Common myeloid progenitor, CD34-positive (primary cell): ENCODE measurements at regions of chr10 and their contacts with region 1.

Region 1: GRCh38 chr10:62038609-62039190 is 137.2 kb downstream of the ARID5B start:
- DNase-seq: peak; percentile 77 to 87 (median 86)
- H3K4me3 ChIP-seq: peak overlapping the region in 3 of 7 experiments; percentile 30 to 56 (median 37)
- H3K27ac ChIP-seq: no peak overlapping the region
- H3K4me1 ChIP-seq: peaks cover 13 to 51% (median 30%) of the 10 kb centered on the region in 4 experiments
- H3K27me3 ChIP-seq: no peaks in the 10 kb centered on the region

Region 2: DNA sequence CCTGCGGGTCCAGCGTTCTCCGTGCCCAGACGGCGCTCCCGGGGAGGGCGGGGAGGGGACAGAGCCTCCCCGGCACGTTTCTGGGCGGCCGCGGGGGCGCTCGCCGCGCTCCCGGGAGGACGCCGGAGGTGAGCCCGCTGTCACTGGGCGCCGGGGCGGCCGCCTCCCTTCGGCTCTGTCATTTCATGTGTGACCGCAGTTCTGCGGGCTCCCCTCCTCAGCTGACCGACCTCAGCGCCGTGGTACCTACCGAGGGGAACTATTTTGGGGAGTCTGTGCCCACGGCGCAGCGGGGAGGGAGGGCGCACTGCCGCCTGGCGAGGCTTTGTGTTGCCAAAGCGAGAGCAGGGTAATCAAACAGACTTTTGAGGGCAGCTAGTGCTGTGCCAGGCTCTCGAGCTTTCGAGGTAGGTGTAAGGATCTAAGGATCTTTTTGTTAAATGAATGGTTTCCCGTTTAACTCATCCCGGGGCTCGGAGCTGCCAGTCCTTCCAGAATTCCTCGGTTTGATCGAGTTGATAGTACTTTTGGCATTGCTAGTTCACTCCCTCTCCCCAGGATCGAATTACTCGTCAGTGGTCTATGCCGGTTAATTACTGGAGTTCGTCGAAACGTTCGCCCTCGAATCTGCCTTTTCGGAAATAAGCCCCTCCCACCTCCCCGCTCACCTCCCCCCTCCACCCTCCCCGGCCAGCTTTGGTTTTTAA is 135.3 kb before region 1 on chr10:
- CTCF ChIA-PET with region 1: interaction called, 14 read pairs
- POLR2A ChIA-PET with region 1: interaction called, 3 read pairs
- DNase-seq: peak; percentile 67 to 86 (median 77)
- H3K4me3 ChIP-seq: peak overlapping the region; percentile 58 to 100 (median 92)
- H3K27ac ChIP-seq: peak overlapping the region; percentile 85 to 99
- H3K4me1 ChIP-seq: peaks cover 16 to 48% (median 29%) of the 10 kb centered on the region in 4 experiments
- H3K27me3 ChIP-seq: no peaks in the 10 kb centered on the region

Region 3: DNA sequence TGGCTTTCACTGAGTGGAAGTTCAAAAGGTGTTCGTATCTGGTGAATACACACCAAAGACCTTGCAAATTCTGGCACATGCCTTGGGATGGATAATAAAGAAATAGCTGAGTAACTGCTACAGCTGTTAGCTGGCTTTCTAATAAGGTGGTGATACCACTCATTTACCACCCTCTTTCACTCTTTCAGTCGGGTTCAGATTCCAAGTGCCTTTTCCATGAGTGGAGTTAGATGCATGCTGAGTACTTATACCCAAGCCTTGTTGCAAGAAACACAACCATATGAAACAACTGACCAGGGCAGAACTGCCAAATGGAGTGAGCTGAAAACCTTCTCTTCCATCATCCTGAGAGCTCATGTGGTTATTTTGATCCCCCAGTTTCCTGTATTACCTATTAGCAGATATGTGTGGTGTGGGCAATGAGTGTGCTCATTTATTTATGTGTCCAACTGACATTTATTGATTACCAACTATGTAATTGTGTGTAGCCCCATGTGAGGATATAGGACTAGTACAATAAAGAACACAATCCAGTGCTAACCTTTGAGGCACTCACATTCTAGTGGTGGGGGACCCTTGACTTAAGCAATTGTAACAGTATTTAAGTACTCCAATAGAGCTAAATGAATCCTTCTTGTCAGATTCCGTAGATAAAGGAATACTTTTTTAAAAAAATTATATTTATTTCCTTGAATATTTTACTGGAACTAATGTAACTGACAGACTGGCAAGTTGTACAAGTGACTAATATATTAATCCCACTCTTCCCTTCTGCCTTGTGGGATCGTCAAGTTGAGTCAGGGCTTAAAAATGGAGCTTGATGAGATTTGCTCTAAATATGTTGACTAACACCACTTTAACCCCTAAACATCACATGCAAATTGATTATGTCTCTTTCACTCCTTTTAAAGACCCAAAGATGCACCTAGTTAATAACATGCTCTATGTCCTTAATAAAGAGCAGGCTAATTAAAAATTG is 12.5 kb before region 1 on chr10:
- CTCF ChIA-PET with region 1: interaction called, 14 read pairs
- POLR2A ChIA-PET with region 1: no interaction called
- DNase-seq: no peak
- H3K4me3 ChIP-seq: no peak overlapping the region
- H3K27ac ChIP-seq: no peak overlapping the region
- H3K4me1 ChIP-seq: peaks cover under 1 to 4% (median 2%) of the 10 kb centered on the region in 4 experiments
- H3K27me3 ChIP-seq: no peaks in the 10 kb centered on the region

Region 4: DNA sequence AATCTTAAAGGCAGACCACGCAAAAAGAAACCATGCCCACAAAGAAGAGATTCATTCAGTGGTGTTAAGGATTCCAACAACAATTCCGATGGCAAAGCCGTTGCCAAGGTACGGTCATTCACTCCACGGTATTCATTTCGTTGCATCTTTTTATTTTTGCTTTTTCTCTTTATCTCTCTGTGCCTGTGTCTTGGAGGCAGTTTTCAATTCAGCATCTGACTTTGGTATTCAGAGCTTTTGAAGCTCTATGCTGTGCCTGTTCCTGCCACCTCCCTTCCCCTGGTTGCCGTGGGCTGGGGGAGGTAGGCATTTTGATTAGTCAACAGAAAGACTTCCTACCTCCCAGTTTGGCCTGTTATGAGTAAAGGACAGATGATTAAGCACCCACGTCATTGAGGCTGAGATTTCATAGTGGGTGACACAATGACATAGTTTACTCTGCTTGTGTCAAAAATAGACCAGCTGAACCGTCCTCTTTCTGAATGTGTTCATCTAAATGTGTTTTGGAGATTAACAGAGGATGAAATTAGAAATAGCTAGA is 12.3 kb after region 1 on chr10:
- CTCF ChIA-PET with region 1: interaction called, 19 read pairs
- POLR2A ChIA-PET with region 1: no interaction called
- DNase-seq: peak in 1 of 3 donors; percentile 31
- H3K4me3 ChIP-seq: no peak overlapping the region
- H3K27ac ChIP-seq: no peak overlapping the region
- H3K4me1 ChIP-seq: peaks cover 13 to 59% (median 26%) of the 10 kb centered on the region in 4 experiments
- H3K27me3 ChIP-seq: no peaks in the 10 kb centered on the region

Region 5: DNA sequence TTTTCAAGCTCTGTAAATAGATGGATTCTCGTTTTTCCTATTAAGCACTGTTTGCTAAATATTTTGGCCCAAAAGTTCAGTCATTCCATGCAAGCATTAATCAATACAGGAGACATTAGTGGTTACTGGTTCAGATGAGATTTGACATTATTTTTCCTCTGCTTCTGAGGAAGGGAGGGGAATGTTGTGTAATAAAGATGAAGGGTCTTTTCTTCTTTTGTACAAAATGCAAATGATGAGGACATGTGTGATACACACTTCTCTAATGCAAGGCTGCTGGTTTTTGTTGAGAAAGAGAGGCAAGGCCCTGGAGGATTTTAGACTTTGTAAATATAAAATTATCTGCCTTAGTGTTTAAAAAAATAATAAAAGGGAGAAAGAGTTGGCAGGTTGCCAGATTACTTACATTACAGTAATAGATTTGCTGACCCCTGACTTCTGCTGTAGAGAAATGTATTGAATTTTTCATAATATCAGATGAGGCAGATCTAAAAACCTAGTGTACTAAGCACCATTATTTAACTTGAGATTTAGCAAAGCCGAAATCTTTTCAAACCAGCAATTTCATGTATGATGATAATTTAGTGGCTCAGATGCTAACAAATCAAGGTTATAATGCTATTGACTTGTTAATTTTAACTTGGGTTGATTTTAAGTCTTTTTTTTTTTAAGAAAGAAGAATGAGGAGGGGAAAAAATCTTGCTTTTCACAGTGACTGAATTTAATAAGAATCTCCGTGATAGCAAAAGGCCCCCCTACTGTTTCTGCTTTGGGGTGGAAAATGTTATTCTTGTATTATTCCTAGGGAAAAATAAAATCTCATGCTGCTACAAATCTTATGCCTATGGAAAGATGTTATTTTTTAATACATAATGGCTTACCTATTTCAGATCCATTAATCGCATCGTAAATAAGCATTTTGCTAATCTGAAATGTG is 42.9 kb after region 1 on chr10:
- CTCF ChIA-PET with region 1: no interaction called
- POLR2A ChIA-PET with region 1: no interaction called
- DNase-seq: no peak
- H3K4me3 ChIP-seq: no peak overlapping the region
- H3K27ac ChIP-seq: peak overlapping the region; percentile 95 to 97
- H3K4me1 ChIP-seq: peaks cover 29 to 43% (median 36%) of the 10 kb centered on the region in 4 experiments
- H3K27me3 ChIP-seq: no peaks in the 10 kb centered on the region

Region 6: DNA sequence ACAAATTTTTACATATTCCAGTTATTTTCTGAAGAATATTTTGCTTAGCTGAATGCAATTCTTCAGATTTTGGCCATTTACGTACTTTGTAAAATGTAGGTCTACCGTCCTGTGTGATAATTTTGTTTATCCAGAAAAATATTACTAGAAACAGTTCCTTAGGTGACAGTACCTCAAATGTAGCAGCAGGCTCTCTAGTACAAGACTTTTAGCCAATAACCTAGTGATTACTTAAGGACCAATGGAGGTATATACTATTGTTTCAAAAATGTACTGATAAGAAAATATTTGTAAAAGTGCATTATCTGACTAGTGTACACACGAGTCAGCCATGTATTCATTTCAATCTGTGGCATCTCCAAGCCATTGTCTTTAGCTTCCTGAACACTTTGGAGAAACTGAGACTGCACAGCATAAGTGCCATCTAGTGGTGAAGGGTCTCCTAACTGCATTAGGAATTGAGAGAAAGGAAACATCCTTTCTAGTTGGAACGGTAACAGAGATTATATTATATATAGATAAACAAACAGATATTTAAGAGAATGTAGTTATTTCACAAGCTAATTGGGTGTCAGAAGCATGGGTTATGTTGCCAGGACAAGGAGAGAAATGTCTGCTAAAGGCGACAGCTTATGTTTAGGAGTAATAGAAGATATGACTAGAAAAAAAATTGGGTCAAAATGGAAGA is 206.2 kb after region 1 on chr10:
- CTCF ChIA-PET with region 1: interaction called, 72 read pairs
- POLR2A ChIA-PET with region 1: no interaction called
- DNase-seq: peak; percentile 46 to 50 (median 49)
- H3K4me3 ChIP-seq: peak overlapping the region in 1 of 7 experiments; percentile 34
- H3K27ac ChIP-seq: no peak overlapping the region
- H3K4me1 ChIP-seq: peaks cover 11 to 28% (median 12%) of the 10 kb centered on the region in 4 experiments
- H3K27me3 ChIP-seq: no peaks in the 10 kb centered on the region